ENCODE measurements at regions of chr2 and their contacts with region 1.

Region 1: GRCh38 chr2:167406558-167406957 is 518.3 kb downstream of the XIRP2 start:
- DNase-seq: no peak
- ATAC-seq: no peak
- H3K4me3 ChIP-seq: no peak overlapping the region
- H3K27ac ChIP-seq: no peak overlapping the region
- H3K4me1 ChIP-seq: no peaks in the 10 kb centered on the region
- H3K27me3 ChIP-seq: no peaks in the 10 kb centered on the region
- CTCF ChIP-seq: no peak
- POLR2A ChIP-seq: no peak

Region 2: GRCh38 chr2:167264380-167264779 is 142.2 kb before region 1 on chr2:
- intact Hi-C with region 1: loop called in 1 of 10 experiments (anchors 10 kb)
- DNase-seq: no peak
- ATAC-seq: peak in 3 of 4 donors; percentile 56 to 72 (median 58)
- H3K4me3 ChIP-seq: no peak overlapping the region
- H3K27ac ChIP-seq: no peak overlapping the region
- H3K4me1 ChIP-seq: peaks cover 0 to 5% (median 0%) of the 10 kb centered on the region in 12 donors
- H3K27me3 ChIP-seq: no peaks in the 10 kb centered on the region
- CTCF ChIP-seq: peak in 8 of 12 donors; percentile 14 to 40 (median 28)
- POLR2A ChIP-seq: no peak

Region 3: GRCh38 chr2:167438206-167438605 is 31.6 kb after region 1 on chr2:
- intact Hi-C with region 1: no loop called
- DNase-seq: no peak
- ATAC-seq: no peak
- H3K4me3 ChIP-seq: no peak overlapping the region
- H3K27ac ChIP-seq: no peak overlapping the region
- H3K4me1 ChIP-seq: no peaks in the 10 kb centered on the region
- H3K27me3 ChIP-seq: no peaks in the 10 kb centered on the region
- CTCF ChIP-seq: no peak
- POLR2A ChIP-seq: no peak